PC-9 (cell line): ENCODE measurements at regions of chr16 and their contacts with region 1.

Region 1: GRCh38 chr16:56600398-56600999 is 7.9 kb upstream of the MT2A start:
- DNase-seq: peak in 1 of 2 experiments; percentile 48
- H3K4me3 ChIP-seq: no peak overlapping the region
- H3K27ac ChIP-seq: no peak overlapping the region
- H3K4me1 ChIP-seq: peaks cover 19% of the 10 kb centered on the region
- H3K27me3 ChIP-seq: no peaks in the 10 kb centered on the region
- CTCF ChIP-seq: peak; percentile 86

Region 2: DNA sequence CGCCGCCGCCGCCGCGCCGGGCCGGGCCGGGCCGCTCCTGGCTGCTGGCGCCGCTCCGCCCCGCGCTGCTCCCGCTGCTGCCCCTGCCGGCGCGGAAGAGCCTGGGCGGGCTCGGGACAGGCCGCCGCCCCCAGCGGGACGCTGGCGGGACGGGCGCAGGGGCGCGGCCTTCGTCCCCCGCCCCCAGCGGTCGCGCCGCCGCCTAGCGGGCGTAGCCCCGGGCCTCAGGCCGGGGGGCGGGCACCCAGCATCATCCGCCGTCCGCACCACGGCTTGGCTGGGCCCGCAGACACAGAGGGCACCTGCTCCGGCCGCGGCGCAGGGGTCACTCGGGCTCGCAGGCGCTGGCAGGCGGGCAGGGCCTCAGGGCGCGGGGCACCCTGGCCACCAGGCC is 175.1 kb before region 1 on chr16 and contains the start of gene AMFR:
- CTCF ChIA-PET with region 1: no interaction called
- POLR2A ChIA-PET with region 1: no interaction called
- intact Hi-C with region 1: no loop called
- DNase-seq: peak; percentile 57 to 82
- H3K4me3 ChIP-seq: peak within 1 kb of the TSS; percentile 64
- H3K27ac ChIP-seq: peak within 1 kb of the TSS; percentile 27
- H3K4me1 ChIP-seq: peaks cover 43% of the 10 kb centered on the region
- H3K27me3 ChIP-seq: no peaks in the 10 kb centered on the region
- CTCF ChIP-seq: no peak; the same call in 1 of the 2 replicates
- total RNA-seq, gene AMFR: 89.4 and 132 TPM in 2 replicates

Region 3: GRCh38 chr16:56513972-56514371 is 86.5 kb before region 1 on chr16:
- CTCF ChIA-PET with region 1: interaction called, 4 read pairs
- POLR2A ChIA-PET with region 1: no interaction called
- intact Hi-C with region 1: loop called (anchors 1 kb)
- DNase-seq: peak; percentile 31 to 62
- H3K4me3 ChIP-seq: no peak overlapping the region
- H3K27ac ChIP-seq: no peak overlapping the region
- H3K4me1 ChIP-seq: peaks cover 20% of the 10 kb centered on the region
- H3K27me3 ChIP-seq: no peaks in the 10 kb centered on the region
- CTCF ChIP-seq: peak; percentile 74

Region 4: DNA sequence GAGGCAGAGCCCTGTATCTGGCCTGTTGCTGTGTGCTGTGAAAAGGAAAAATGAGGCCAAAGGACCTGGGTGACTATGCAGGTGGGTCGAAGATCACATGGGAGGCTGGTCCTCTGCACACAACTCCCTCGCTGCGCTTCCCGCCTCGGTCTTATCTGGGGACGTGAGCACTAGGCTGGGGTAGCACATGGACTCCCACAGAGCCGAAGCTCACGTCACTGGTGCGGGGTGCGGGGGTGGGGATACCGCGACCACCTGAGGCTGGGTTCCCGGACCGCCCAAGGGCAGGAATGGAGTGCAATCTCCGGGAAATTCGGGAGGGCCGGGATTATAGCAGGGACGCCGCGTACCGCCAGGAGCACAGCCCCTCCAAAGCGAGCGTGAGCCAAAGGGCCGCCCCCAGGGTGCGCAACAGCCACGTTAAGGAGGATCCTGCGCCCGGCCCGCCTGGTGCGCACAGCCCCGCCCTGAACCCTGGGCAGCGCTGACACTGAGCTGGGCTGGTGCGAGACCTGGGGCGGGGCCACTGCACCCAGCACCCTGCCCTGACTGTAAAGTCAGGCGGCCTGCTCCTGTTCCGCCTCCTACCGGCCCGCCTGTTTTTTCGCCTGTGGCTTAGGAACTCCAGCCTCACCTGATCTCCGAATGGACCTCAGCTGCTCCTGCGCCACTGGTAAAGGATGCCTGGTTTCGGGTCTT is 42.7 kb after region 1 on chr16:
- CTCF ChIA-PET with region 1: interaction called, 5 read pairs
- POLR2A ChIA-PET with region 1: no interaction called
- intact Hi-C with region 1: loop called (anchors 2 kb)
- DNase-seq: peak; percentile 69 to 79
- H3K4me3 ChIP-seq: peak overlapping the region; percentile 32; the same call in 1 of the 2 replicates
- H3K27ac ChIP-seq: no peak overlapping the region
- H3K4me1 ChIP-seq: peaks cover 34% of the 10 kb centered on the region
- H3K27me3 ChIP-seq: no peaks in the 10 kb centered on the region
- CTCF ChIP-seq: peak; percentile 54

Region 5: GRCh38 chr16:56657555-56658326 is 57.2 kb after region 1 on chr16 and contains the start of gene MT1F:
- CTCF ChIA-PET with region 1: interaction called, 12 read pairs
- POLR2A ChIA-PET with region 1: no interaction called
- intact Hi-C with region 1: no loop called
- DNase-seq: peak; percentile 81 to 83
- H3K4me3 ChIP-seq: peak within 1 kb of the TSS; percentile 55
- H3K27ac ChIP-seq: no peak within 1 kb of the TSS
- H3K4me1 ChIP-seq: peaks cover 19% of the 10 kb centered on the region
- H3K27me3 ChIP-seq: peaks cover 11% of the 10 kb centered on the region
- CTCF ChIP-seq: no peak
- total RNA-seq, gene MT1F: 4.0 and 10.3 TPM in 2 replicates